HCT116 (cell line): ENCODE measurements at regions of chr5 and their contacts with region 1.

Region 1: GRCh38 chr5:52989781-52990527 is 802 bp downstream of the ITGA2 start:
- DNase-seq: peak; percentile 18
- ATAC-seq: peak; percentile 34
- H3K4me3 ChIP-seq: peak overlapping the region; percentile 84 to 87
- H3K27ac ChIP-seq: peak overlapping the region; percentile 82
- H3K4me1 ChIP-seq: peaks cover 31 to 46% of the 10 kb centered on the region in 2 experiments
- H3K27me3 ChIP-seq: no peaks in the 10 kb centered on the region
- CTCF ChIP-seq: peak in 2 of 3 experiments; percentile 13 to 35; a peak in 2 of 6 replicates
- POLR2A ChIP-seq: no peak
- RAD21 ChIP-seq: peak; percentile 55

Region 2: GRCh38 chr5:52799983-52800393 is 190.0 kb before region 1 on chr5:
- CTCF ChIA-PET with region 1: no interaction called
- POLR2A ChIA-PET with region 1: no interaction called
- RAD21 ChIA-PET with region 1: no interaction called
- intact Hi-C with region 1: loop called (anchors 1 kb)
- DNase-seq: peak; percentile 83
- ATAC-seq: peak; percentile 87
- H3K4me3 ChIP-seq: peak overlapping the region; percentile 89 to 93
- H3K27ac ChIP-seq: peak overlapping the region; percentile 85
- H3K4me1 ChIP-seq: peaks cover 6 to 27% of the 10 kb centered on the region in 2 experiments; a peak in 3 of 4 replicates
- H3K27me3 ChIP-seq: no peaks in the 10 kb centered on the region
- CTCF ChIP-seq: no peak
- POLR2A ChIP-seq: peak; percentile 45
- RAD21 ChIP-seq: no peak

Region 3: DNA sequence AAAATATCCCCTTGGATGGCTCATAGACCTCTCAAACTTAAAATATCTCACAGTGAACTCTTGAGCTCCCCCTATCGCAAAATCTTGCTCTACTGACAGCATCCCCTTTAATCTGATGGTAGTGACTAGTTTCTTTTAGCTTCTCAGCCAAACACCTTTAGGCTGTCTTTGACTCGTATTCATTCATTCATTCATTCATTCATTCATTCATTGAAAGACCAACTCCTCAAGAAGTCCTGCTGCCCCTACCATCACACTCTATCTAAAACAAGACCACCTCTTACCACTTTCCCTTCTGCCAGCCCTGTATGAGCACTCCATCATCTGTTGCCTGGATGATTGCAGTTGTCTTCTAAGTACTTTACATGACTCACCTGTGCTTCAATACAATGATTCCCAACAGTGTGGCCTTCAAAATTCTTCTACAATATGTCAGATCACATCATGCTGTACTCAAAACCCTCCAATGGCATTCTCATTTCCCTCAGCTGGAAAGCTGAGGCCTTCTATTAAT is 46.0 kb after region 1 on chr5:
- CTCF ChIA-PET with region 1: interaction called, 4 read pairs
- POLR2A ChIA-PET with region 1: interaction called, 5 read pairs
- RAD21 ChIA-PET with region 1: interaction called in 1 of 2 experiments, 4 read pairs
- intact Hi-C with region 1: loop called (anchors 2 kb)
- DNase-seq: no peak
- ATAC-seq: peak; percentile 70
- H3K4me3 ChIP-seq: no peak overlapping the region
- H3K27ac ChIP-seq: no peak overlapping the region
- H3K4me1 ChIP-seq: peaks cover 52 to 76% of the 10 kb centered on the region in 2 experiments
- H3K27me3 ChIP-seq: no peaks in the 10 kb centered on the region
- CTCF ChIP-seq: peak; percentile 14 to 74 (median 61); a peak in 5 of 6 replicates
- POLR2A ChIP-seq: no peak
- RAD21 ChIP-seq: 0 out of 2 replicates have a peak, but pooled peaks have one; percentile 23